ENCODE measurements at regions of chr9 and their contacts with region 1.

Region 1: GRCh38 chr9:122827761-122828093 is 661 bp downstream of the PDCL start:
- DNase-seq: no peak
- H3K4me3 ChIP-seq: peak overlapping the region; percentile 93 to 98
- H3K4me3 Mint-ChIP-seq: peak overlapping the region; percentile 95 to 100 (median 98)
- H3K27ac ChIP-seq: peak overlapping the region; percentile 87
- H3K27ac Mint-ChIP-seq: peak overlapping the region; percentile 96 to 98 (median 97)
- H3K4me1 ChIP-seq: peaks cover 37% of the 10 kb centered on the region
- H3K4me1 Mint-ChIP-seq: peaks cover 26 to 53% (median 34%) of the 10 kb centered on the region in 4 donors
- H3K27me3 ChIP-seq: no peaks in the 10 kb centered on the region
- H3K27me3 Mint-ChIP-seq: no peaks in the 10 kb centered on the region

Region 2: GRCh38 chr9:122159026-122159924 is 668.5 kb before region 1 on chr9 and contains the starts of genes MORN5 and NDUFA8:
- CTCF ChIA-PET with region 1: no interaction called
- POLR2A ChIA-PET with region 1: no interaction called
- intact Hi-C with region 1: loop called (anchors 2 kb)
- DNase-seq: peak; percentile 94 to 96 (median 95)
- H3K4me3 ChIP-seq: peak within 1 kb of the TSS; percentile 89 to 93
- H3K4me3 Mint-ChIP-seq: peak within 1 kb of the TSS; percentile 95 to 99 (median 98)
- H3K27ac ChIP-seq: peak within 1 kb of the TSS; percentile 82
- H3K27ac Mint-ChIP-seq: peak within 1 kb of the TSS; percentile 82 to 99 (median 97)
- H3K4me1 ChIP-seq: peaks cover 25% of the 10 kb centered on the region
- H3K4me1 Mint-ChIP-seq: peaks cover 29 to 48% (median 35%) of the 10 kb centered on the region in 4 donors
- H3K27me3 ChIP-seq: no peaks in the 10 kb centered on the region
- H3K27me3 Mint-ChIP-seq: peaks cover 8 to 10% of the 10 kb centered on the region in 2 donors
- total RNA-seq, gene MORN5: not detected
- total RNA-seq, gene NDUFA8: 17.6 to 20.4 TPM

Region 3: GRCh38 chr9:122816163-122816867 is 11.4 kb before region 1 on chr9:
- CTCF ChIA-PET with region 1: interaction called, 7 read pairs
- POLR2A ChIA-PET with region 1: interaction called, 51 read pairs
- intact Hi-C with region 1: no loop called
- DNase-seq: peak; percentile 35 to 66 (median 45)
- H3K4me3 ChIP-seq: peak overlapping the region; percentile 1 to 18
- H3K4me3 Mint-ChIP-seq: peak overlapping the region; percentile 75 to 87 (median 84)
- H3K27ac ChIP-seq: peak overlapping the region; percentile 41
- H3K27ac Mint-ChIP-seq: peak overlapping the region; percentile 90 to 98 (median 94)
- H3K4me1 ChIP-seq: peaks cover 42% of the 10 kb centered on the region
- H3K4me1 Mint-ChIP-seq: peaks cover 29 to 44% (median 35%) of the 10 kb centered on the region in 4 donors
- H3K27me3 ChIP-seq: no peaks in the 10 kb centered on the region
- H3K27me3 Mint-ChIP-seq: no peaks in the 10 kb centered on the region

Region 4: DNA sequence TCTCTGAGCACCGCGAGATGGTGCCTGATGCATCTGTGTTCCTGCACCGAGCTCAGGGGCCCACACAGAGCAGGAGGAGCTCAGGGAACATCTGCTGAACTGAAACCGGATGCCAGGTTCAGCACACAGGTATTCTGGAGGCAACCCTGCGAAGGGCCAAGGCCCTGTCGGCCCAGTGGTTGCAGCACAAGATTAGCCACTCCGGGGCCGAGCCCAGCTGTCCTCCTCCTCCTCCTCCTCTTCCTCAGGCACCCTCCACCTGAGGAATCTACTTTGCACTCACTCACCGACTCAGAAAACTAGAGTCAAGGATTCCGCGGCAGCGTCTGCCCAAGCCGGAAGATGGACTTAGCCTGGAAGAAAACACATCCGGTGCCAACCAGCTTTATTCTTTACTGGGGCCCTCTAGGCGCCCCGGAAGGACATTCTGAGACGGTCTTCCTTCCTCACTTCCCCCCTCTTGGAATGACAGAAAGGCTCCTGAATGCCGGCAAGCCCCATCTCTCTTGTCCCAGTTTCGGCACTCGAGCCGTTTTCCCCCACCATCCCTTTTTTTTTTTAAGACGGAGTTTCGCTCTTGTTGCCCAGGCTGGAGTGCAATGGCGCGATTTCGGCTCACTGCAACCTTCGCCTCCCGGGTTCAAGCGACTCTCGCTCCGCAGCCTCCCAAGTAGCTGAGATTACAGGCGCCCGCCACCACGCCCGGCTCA is 85.4 kb after region 1 on chr9 and contains the start of gene ZBTB6:
- CTCF ChIA-PET with region 1: no interaction called
- POLR2A ChIA-PET with region 1: interaction called, 11 read pairs
- intact Hi-C with region 1: no loop called
- DNase-seq: peak; percentile 77 to 92 (median 80)
- H3K4me3 ChIP-seq: peak within 1 kb of the TSS; percentile 95 to 96
- H3K4me3 Mint-ChIP-seq: peak within 1 kb of the TSS; percentile 93 to 99 (median 98)
- H3K27ac ChIP-seq: peak within 1 kb of the TSS; percentile 86
- H3K27ac Mint-ChIP-seq: peak within 1 kb of the TSS; percentile 89 to 99 (median 99)
- H3K4me1 ChIP-seq: peaks cover 24% of the 10 kb centered on the region
- H3K4me1 Mint-ChIP-seq: peaks cover 21 to 36% (median 26%) of the 10 kb centered on the region in 4 donors
- H3K27me3 ChIP-seq: no peaks in the 10 kb centered on the region
- H3K27me3 Mint-ChIP-seq: no peaks in the 10 kb centered on the region
- total RNA-seq, gene ZBTB6: 20.2 to 20.5 TPM

Measured in CD4-positive, alpha-beta memory T cell (primary cell).